A673 (cell line): ENCODE measurements at regions of chr6 and their contacts with region 1.

Region 1: GRCh38 chr6:8707956-8708772 is 272.8 kb upstream of the SLC35B3 start:
- DNase-seq: peak; percentile 81
- H3K4me3 ChIP-seq: peak overlapping the region; percentile 20
- H3K27ac ChIP-seq: no peak overlapping the region
- H3K4me1 ChIP-seq: peaks cover 40% of the 10 kb centered on the region
- H3K27me3 ChIP-seq: no peaks in the 10 kb centered on the region
- CTCF ChIP-seq: peak; percentile 77

Region 2: GRCh38 chr6:8499540-8499939 is 208.6 kb before region 1 on chr6:
- CTCF ChIA-PET with region 1: no interaction called
- POLR2A ChIA-PET with region 1: no interaction called
- intact Hi-C with region 1: loop called (anchors 5 kb)
- DNase-seq: peak; percentile 64
- H3K4me3 ChIP-seq: no peak overlapping the region
- H3K27ac ChIP-seq: no peak overlapping the region
- H3K4me1 ChIP-seq: peaks cover 7% of the 10 kb centered on the region
- H3K27me3 ChIP-seq: no peaks in the 10 kb centered on the region
- CTCF ChIP-seq: peak; percentile 84

Region 3: DNA sequence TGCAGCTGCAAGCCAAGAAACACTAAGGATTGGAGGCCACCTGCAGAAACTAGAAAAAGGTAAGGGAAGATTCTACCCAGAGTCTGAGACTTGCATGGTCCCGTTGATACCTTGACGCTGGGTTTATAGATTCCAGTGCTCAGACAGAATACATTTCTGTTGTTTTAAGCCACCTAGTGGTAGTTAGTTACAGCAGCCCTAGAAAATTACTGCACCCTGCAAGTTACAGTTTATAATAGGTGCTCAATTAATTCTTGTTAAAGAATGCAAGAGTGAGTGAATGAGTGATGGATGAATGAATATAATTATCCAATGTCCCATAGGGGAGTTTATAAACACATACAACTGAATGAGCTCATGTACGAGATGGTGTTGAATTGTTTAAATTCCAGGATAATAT is 180.3 kb after region 1 on chr6:
- CTCF ChIA-PET with region 1: no interaction called
- POLR2A ChIA-PET with region 1: no interaction called
- intact Hi-C with region 1: loop called (anchors 1 kb)
- DNase-seq: peak; percentile 52
- H3K4me3 ChIP-seq: no peak overlapping the region
- H3K27ac ChIP-seq: no peak overlapping the region
- H3K4me1 ChIP-seq: no peaks in the 10 kb centered on the region
- H3K27me3 ChIP-seq: no peaks in the 10 kb centered on the region
- CTCF ChIP-seq: peak; percentile 65

Region 4: DNA sequence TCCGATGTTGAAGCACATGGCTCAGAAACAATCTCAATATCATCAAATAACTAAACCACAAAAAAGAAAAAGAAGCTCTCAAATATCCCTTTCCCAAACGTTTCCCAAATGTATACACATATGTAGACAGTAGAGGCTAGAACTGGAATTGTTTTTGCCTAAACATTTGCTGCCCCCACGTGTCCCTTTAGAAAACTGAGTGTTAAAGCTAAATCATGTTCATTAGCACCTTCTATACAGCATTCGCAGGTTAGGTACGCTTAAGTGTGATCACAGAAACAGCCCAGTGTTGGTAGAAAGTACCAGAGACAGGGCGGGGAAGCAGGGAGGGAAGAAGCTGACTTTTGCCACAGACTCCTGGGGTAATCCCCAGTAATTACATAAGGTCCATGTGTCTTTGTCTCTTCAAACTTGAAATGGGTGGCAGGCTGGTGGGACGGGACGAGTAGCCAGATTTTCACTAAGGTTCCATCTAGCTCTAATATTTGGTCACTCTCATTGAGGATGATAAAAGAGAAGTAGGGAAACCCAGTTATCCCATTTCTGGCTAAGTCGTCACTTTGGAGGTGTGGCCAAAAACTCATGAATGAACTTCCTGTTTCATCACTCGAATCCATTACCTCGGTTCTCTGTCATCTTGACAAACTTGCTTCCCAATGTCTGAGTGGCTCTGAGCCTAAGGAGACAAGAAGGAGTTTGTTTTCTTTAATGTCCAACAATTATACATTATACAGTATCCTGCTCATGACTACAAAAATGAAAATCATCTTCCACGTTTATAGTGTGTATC is 1721.7 kb after region 1 on chr6:
- CTCF ChIA-PET with region 1: interaction called, 17 read pairs
- POLR2A ChIA-PET with region 1: no interaction called
- intact Hi-C with region 1: loop called (anchors 5 kb)
- DNase-seq: peak; percentile 85
- H3K4me3 ChIP-seq: peak overlapping the region; percentile 2
- H3K27ac ChIP-seq: peak overlapping the region; percentile 51
- H3K4me1 ChIP-seq: peaks cover 38% of the 10 kb centered on the region
- H3K27me3 ChIP-seq: no peaks in the 10 kb centered on the region
- CTCF ChIP-seq: peak; percentile 78